RWPE1 (cell line): ENCODE measurements at regions of chr6 and their contacts with region 1.

Region 1: DNA sequence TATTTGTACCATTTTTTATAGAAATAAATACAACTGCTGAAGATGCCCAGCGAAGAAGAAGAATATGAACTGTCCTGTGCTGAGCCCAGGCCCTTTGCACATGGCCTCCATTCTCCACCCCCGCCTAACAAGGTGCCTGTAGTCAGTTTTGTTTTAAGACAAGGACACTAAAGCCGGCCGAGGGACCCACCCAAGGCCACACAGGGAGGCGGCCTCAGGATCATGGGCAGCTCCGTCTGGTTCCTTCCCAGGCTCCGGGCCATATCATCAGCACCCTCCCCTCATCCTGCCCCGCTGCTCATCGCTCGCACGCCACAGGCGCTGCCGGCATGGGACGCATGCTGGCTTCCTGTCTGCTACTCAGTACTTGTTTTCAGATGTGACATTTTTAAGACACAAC is 21.3 kb downstream of the PSMG4 start:
- DNase-seq: no peak
- H3K27ac ChIP-seq: no peak overlapping the region
- CTCF ChIP-seq: no peak

Region 2: DNA sequence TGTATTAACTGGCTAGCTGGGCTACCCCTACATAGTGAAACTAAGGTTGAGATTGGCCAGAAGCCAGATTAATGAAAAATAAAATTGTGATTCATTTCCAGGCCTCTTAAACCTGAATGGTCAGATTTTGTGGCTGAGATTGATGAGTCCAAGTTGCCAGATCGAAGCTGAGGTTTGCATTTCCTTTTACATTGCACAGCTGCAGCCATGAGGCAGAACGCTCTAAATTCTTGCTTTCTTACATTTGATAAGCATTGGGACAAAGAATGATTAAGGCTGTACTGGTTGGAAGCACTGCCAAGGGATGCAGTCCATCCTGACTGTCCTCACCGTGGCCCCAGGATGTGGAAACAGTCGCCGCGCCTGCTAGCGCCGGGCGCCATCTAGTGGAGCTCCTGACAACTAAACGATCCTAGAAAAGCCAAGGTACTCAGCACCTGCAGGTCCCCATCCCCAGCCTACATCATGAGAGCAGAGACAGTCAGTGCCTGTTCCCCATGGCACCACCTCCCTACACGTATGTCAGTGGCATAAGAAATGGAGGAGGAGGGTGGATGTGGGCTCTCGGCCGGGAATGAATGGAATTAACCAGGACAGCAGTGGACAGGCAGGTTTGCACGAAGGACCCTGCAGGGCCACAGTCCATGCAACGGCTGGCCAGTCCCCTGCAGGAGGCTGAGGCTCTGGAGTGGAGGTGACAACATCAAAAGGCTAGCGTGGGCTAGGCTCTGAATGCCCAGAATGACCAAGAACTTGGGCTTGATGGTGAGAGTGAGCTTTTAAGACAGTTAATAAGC is 452.5 kb after region 1 on chr6:
- CTCF ChIA-PET with region 1: interaction called, 21 read pairs
- POLR2A ChIA-PET with region 1: interaction called, 3 read pairs
- DNase-seq: peak; percentile 68
- H3K27ac ChIP-seq: peak overlapping the region; percentile 57
- CTCF ChIP-seq: peak; percentile 95

Region 3: DNA sequence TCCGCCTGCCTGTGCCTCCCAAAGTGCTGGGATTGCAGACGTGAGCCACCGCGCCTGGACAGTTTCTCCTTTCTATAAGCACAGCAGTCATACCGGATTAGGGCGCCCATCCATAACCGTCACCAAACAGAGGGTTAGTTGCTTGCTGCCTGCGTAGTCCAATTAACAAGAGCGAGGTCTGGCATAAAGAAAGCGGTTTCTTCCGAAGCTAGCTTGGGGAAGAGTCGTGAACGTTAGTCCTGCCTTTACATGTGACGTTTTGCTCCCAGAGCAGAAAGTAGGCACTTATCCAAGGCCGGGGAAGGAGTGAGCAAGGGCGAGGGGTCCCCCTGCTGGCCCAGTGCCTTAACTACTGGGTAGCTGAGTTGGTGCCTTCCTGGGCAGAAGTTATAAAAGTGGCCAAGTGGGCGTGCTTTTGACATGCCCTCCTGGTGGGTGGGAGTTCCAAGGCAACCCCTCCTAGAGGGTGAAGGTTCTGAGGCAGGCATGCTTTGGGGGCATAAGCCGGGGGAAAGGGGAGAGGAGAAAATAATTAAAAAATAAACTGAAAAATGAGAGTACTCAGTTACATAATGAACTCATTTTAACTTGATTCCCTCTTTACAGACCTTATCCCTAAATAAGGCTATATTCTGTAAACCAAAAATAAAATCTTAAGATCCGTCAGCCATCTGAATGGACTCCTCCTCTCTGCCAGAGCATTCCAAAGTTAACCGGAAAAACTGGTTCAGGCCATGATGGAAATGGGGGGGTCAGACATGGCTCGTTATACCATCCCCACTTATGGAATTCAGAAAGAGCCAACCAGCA is 710.8 kb after region 1 on chr6:
- CTCF ChIA-PET with region 1: interaction called, 11 read pairs
- POLR2A ChIA-PET with region 1: no interaction called
- DNase-seq: peak; percentile 82
- H3K27ac ChIP-seq: peak overlapping the region; percentile 61
- CTCF ChIP-seq: peak; percentile 89